WTC11 (cell line): ENCODE measurements at regions of chr11 and their contacts with region 1.

Region 1: GRCh38 chr11:96389720-96390487 is at the starts of genes CCDC82 and JRKL:
- DNase-seq: peak; percentile 99
- ATAC-seq: peak; percentile 96
- H3K4me3 Mint-ChIP-seq: peak within 1 kb of the TSS; percentile 89
- H3K27ac Mint-ChIP-seq: peak within 1 kb of the TSS; percentile 91
- H3K4me1 Mint-ChIP-seq: peaks cover 20% of the 10 kb centered on the region
- H3K27me3 Mint-ChIP-seq: peaks cover 8% of the 10 kb centered on the region
- CTCF ChIP-seq: no peak
- total RNA-seq, gene CCDC82: 15.0 to 16.3 TPM (median 15.3 TPM) in 3 replicates
- total RNA-seq, gene JRKL: 5.0 to 6.1 TPM (median 5.7 TPM) in 3 replicates

Region 2: GRCh38 chr11:95790123-95790932 is 599.6 kb before region 1 on chr11 and contains the start of gene CEP57:
- CTCF ChIA-PET with region 1: no interaction called
- POLR2A ChIA-PET with region 1: interaction called, 25 read pairs
- DNase-seq: peak; percentile 94
- ATAC-seq: peak; percentile 65
- H3K4me3 Mint-ChIP-seq: peak within 1 kb of the TSS; percentile 99
- H3K27ac Mint-ChIP-seq: peak within 1 kb of the TSS; percentile 100
- H3K4me1 Mint-ChIP-seq: peaks cover 34% of the 10 kb centered on the region
- H3K27me3 Mint-ChIP-seq: no peaks in the 10 kb centered on the region
- CTCF ChIP-seq: no peak
- total RNA-seq, gene CEP57: 67.6 to 70.7 TPM (median 70.2 TPM) in 3 replicates

Region 3: DNA sequence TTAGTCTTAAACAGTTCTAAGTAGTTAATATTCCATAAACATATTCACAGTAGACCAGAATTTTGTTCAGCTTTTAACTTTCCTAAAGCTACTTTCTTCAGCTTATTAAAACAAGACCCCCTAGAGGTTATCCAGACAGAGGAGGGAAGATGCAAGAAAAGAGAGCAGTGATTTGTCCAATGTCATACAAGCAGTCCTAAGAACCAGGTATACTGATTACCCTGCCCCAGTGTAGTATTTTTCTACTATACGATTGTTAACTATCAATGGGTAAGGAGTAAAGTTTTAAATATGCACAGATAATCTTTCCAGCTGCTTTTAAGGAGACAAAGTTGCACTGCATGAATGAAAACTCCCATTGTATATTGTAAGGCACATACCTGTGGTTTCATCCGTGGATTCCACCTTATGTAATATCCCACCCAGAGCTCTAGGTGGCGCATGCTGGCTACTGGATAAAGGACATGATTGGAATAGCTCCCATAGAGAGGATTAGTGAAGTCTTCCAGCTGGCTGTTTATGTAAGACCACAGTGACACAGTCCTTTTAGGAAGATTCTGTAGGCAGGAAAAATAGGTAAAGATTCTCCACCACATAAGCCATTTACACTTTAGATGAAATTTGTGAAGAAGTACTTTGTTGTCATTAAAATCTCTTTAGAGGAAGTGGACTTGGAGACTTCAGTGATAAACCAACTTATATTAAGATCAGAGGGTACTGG is 554.0 kb before region 1 on chr11:
- CTCF ChIA-PET with region 1: interaction called, 19 read pairs
- POLR2A ChIA-PET with region 1: no interaction called
- DNase-seq: peak; percentile 65
- ATAC-seq: peak; percentile 99
- H3K4me3 Mint-ChIP-seq: no peak overlapping the region
- H3K27ac Mint-ChIP-seq: no peak overlapping the region
- H3K4me1 Mint-ChIP-seq: no peaks in the 10 kb centered on the region
- H3K27me3 Mint-ChIP-seq: no peaks in the 10 kb centered on the region
- CTCF ChIP-seq: peak; percentile 78

Region 4: DNA sequence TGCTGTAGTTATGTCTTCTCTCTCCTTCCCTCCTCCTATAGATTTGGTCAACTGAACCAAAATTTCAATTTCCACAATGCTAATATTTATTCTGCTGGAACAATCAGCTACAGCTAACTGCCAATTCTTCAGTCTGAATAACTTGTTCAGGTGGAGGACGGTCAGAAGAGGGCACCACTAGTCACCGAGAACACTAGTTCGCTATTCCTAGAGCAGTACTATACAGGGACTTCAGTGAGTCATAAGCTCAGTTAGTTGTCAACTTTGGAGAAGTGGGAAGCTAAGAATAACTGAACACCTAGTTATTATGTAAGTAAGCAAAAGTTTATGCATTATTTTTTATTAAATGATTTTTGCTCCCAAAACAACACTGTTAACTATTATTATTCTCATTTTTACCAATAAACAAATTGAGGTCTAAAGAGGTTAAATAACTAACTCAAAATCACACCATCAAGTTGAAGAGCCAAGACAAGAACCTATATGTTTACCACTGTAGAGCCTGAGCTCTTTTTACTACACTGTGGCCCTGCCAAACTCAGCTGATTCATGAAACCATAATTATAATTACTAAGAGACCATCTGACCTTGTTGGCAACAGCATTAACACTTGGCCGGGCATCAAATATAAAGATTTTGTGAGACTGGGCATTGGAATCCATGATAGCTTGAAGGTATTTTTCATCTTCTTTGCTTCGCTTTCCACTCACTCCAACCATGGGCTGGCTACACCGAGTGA is 540.6 kb before region 1 on chr11:
- CTCF ChIA-PET with region 1: interaction called, 33 read pairs
- POLR2A ChIA-PET with region 1: no interaction called
- DNase-seq: peak; percentile 30
- ATAC-seq: peak; percentile 96
- H3K4me3 Mint-ChIP-seq: no peak overlapping the region
- H3K27ac Mint-ChIP-seq: no peak overlapping the region
- H3K4me1 Mint-ChIP-seq: no peaks in the 10 kb centered on the region
- H3K27me3 Mint-ChIP-seq: no peaks in the 10 kb centered on the region
- CTCF ChIP-seq: no peak

Region 5: GRCh38 chr11:96054870-96055705 is 334.8 kb before region 1 on chr11:
- CTCF ChIA-PET with region 1: interaction called, 11 read pairs
- POLR2A ChIA-PET with region 1: no interaction called
- DNase-seq: no peak
- ATAC-seq: peak; percentile 59
- H3K4me3 Mint-ChIP-seq: no peak overlapping the region
- H3K27ac Mint-ChIP-seq: peak overlapping the region; percentile 78
- H3K4me1 Mint-ChIP-seq: peaks cover 33% of the 10 kb centered on the region
- H3K27me3 Mint-ChIP-seq: no peaks in the 10 kb centered on the region
- CTCF ChIP-seq: 0 out of 2 replicates have a peak, but pooled peaks have one; percentile 17

Region 6: GRCh38 chr11:96424693-96425092 is 34.8 kb after region 1 on chr11:
- CTCF ChIA-PET with region 1: interaction called, 10 read pairs
- POLR2A ChIA-PET with region 1: no interaction called
- DNase-seq: no peak
- ATAC-seq: no peak
- H3K4me3 Mint-ChIP-seq: no peak overlapping the region
- H3K27ac Mint-ChIP-seq: no peak overlapping the region
- H3K4me1 Mint-ChIP-seq: peaks cover 7% of the 10 kb centered on the region
- H3K27me3 Mint-ChIP-seq: no peaks in the 10 kb centered on the region
- CTCF ChIP-seq: no peak

Region 7: DNA sequence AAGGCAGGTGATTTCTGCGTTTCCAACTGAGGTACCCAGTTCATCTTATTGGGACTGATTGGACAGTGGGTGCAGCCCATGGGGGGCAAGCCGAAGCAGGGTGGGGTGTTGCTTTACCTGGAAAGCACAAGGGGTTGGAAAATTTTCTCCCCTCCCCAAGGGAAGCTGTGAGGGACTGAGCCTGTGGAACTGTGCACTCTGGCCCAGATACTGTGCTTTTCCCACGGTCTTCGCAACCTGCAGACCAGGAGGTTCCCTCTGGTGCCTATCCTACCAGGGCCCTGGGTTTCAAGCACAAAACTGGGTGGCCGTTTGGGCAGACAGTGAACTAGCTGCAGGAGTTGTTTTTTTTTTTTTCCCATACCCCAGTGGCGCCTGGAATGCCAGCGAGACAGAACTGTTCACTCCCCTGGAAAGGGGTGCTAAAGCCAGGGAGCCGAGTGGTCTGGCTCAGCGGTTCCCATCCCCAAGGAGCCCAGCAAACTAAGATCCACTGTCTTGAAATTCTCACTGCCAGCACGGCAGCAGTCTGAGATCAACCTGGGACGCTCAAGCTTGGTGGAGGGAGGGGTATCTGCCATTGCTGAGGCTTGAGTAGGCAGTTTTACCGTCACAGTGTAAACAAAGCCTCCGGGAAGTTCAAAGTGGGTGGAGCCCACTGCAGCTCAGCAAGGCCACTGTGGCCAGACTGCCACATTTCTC is 97.1 kb after region 1 on chr11:
- CTCF ChIA-PET with region 1: no interaction called
- POLR2A ChIA-PET with region 1: no interaction called
- DNase-seq: no peak
- ATAC-seq: peak; percentile 72
- H3K4me3 Mint-ChIP-seq: no peak overlapping the region
- H3K27ac Mint-ChIP-seq: no peak overlapping the region
- H3K4me1 Mint-ChIP-seq: peaks cover 8% of the 10 kb centered on the region
- H3K27me3 Mint-ChIP-seq: peaks cover 14% of the 10 kb centered on the region
- CTCF ChIP-seq: no peak